ENCODE measurements at regions of chr7 and their contacts with region 1.

Region 1: GRCh38 chr7:79770063-79770462 is 316.6 kb upstream of the MAGI2 start:
- DNase-seq: no peak
- H3K4me3 ChIP-seq: no peak overlapping the region
- H3K27ac ChIP-seq: no peak overlapping the region
- H3K27me3 ChIP-seq: no peaks in the 10 kb centered on the region
- CTCF ChIP-seq: no peak

Region 2: DNA sequence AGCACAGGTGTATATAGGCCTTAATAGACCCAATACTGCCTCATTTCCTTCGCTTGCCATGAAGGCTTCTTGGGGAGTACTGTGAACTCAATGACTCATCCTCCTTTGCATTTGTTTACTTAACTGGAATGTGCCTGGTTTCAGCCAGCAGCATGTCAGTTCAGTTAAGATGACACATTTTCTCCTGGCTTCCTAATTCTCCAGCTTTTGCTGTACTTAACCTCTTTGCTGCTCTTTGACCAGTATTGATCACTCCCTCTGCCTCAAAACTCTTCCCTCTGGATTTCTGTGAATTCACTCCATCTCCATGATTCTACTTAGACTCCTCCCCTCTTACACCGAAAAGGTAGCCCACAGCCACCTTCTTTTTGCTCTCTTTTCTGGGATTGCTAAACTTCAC is 452.3 kb before region 1 on chr7:
- CTCF ChIA-PET with region 1: interaction called, 11 read pairs
- POLR2A ChIA-PET with region 1: no interaction called
- DNase-seq: peak; percentile 70
- H3K4me3 ChIP-seq: no peak overlapping the region
- H3K27ac ChIP-seq: no peak overlapping the region
- H3K27me3 ChIP-seq: no peaks in the 10 kb centered on the region
- CTCF ChIP-seq: no peak

Measured in AG04450 (cell line).